Calu3 (cell line): ENCODE measurements at regions of chr6 and their contacts with region 1.

Region 1: DNA sequence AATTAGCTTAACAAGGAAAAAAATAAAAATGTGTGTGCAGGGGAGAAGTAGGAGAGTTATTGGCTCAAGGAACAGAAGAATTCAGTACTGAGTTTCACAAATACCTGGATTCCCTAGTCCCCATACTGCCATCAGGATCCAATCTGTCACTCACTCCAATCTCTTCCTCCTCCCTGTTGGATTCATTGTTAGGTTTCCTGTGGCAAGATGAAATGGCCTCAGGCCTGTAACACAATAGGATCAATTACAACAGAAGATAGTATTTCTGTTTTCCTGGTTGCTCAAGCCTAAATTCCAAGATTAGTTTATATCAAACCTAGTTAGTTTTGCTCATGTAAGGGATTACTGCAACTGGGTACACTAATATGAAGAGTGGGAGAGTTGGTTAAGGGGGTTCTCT is 24.4 kb downstream of the HCRTR2 start:
- DNase-seq: no peak
- H3K4me3 Mint-ChIP-seq: no peak overlapping the region
- H3K27ac Mint-ChIP-seq: no peak overlapping the region
- H3K4me1 Mint-ChIP-seq: peaks cover 8% of the 10 kb centered on the region
- H3K27me3 Mint-ChIP-seq: no peaks in the 10 kb centered on the region
- CTCF ChIP-seq: no peak

Region 2: DNA sequence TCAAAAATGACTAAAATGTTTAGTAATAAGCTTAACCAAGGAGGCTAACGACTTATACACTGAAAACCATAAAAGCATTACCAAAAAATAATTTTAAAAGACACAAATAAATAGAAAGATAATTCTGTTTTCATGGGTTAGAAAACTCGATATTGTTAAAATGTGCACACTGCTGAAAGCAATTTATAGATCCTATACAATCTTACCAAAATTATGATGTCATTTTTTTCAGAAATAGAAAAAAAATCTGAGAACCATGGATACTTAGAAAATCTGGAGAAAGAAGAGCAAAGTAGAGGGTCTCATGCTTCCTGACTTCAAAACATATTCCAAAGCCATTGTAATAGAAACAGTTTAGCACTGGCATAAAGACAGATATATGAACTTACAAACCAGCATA is 22.2 kb after region 1 on chr6:
- CTCF ChIA-PET with region 1: no interaction called
- intact Hi-C with region 1: loop called (anchors 2 kb)
- DNase-seq: no peak
- H3K4me3 Mint-ChIP-seq: no peak overlapping the region
- H3K27ac Mint-ChIP-seq: no peak overlapping the region
- H3K4me1 Mint-ChIP-seq: no peaks in the 10 kb centered on the region
- H3K27me3 Mint-ChIP-seq: no peaks in the 10 kb centered on the region
- CTCF ChIP-seq: no peak